ENCODE measurements at regions of chr3 and their contacts with region 1.

Region 1: DNA sequence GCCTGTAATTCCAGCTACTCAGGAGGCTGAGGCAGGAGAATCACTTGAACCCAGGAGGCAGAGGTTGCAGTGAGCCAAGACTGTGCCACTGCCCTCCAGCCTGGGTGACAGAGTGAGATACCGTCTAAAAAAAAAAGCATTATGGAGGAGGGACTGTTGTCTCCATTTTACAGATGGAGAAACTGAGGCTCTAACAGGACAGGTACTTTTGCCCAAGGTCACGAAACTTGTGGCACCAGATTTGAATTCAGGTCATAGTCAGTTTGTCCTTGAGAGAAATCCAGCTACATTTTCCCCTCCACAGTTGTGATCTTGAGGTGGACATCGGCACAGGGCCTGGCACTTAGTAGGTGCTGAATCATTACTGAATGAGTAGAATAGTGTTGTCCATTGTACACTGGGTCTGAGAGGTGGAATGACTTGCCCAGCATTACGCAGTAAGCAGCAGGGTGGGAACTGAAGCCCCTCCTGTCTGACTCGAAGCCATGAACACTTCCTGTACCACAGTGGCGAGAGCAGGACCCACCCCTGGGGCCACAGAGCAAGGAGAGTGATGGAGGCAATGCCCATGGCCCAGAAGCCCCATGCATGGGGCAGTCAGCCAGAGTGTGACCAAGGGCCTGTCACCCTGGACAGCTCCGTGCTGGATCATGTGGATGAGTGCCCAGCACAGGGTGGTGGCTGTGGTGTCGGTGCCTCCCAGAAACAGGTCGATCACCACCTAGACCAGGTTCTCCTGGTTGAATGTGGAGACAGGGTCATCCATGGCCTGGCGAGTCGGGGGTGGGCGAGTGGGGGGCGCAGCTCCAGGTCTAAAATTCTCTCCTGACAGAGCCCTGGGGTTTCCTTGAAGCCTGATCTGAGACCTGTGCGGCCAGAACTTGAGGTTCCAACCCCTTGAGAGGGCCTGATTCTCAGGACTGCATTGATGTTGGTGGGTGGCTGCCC is 20.4 kb upstream of the PARL start:
- DNase-seq: no peak
- H3K4me3 ChIP-seq: no peak overlapping the region
- H3K27ac ChIP-seq: no peak overlapping the region
- H3K4me1 ChIP-seq: no peaks in the 10 kb centered on the region
- H3K27me3 ChIP-seq: no peaks in the 10 kb centered on the region
- CTCF ChIP-seq: no peak
- POLR2A ChIP-seq: no peak

Region 2: DNA sequence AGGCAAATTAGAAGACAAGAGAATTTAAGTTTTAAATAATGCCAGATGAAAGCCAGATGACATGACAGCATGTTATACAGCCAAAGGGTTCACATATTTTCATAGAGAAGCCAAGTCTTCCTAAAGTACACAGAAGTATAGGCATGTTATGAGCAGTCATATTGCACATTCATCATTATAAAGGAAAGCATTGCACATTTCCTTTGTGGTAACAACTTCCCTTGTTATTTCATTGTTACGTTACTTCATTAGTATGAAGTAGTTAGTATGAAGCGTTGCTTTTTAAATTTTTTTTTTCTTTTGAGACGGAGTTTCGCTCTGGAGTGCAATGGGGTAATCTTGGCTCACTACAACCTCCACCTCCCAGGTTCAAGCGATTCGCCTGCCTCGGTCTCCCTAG is 117.2 kb after region 1 on chr3:
- intact Hi-C with region 1: loop called (anchors 10 kb)
- DNase-seq: no peak
- H3K4me3 ChIP-seq: no peak overlapping the region
- H3K27ac ChIP-seq: no peak overlapping the region
- H3K4me1 ChIP-seq: no peaks in the 10 kb centered on the region
- H3K27me3 ChIP-seq: no peaks in the 10 kb centered on the region
- CTCF ChIP-seq: no peak
- POLR2A ChIP-seq: no peak

Region 3: GRCh38 chr3:184040010-184040409 is 134.9 kb after region 1 on chr3:
- intact Hi-C with region 1: no loop called
- DNase-seq: no peak
- H3K4me3 ChIP-seq: no peak overlapping the region
- H3K27ac ChIP-seq: no peak overlapping the region
- H3K4me1 ChIP-seq: no peaks in the 10 kb centered on the region
- H3K27me3 ChIP-seq: no peaks in the 10 kb centered on the region
- CTCF ChIP-seq: no peak
- POLR2A ChIP-seq: no peak